ENCODE measurements at regions of chr1 and their contacts with region 1.

Region 1: GRCh38 chr1:207672522-207673130 is 27.7 kb downstream of the CR1L start:
- DNase-seq: no peak
- ATAC-seq: no peak
- H3K4me3 Mint-ChIP-seq: no peak overlapping the region
- H3K27ac Mint-ChIP-seq: no peak overlapping the region
- H3K4me1 Mint-ChIP-seq: no peaks in the 10 kb centered on the region
- H3K27me3 Mint-ChIP-seq: peaks cover 56% of the 10 kb centered on the region

Region 2: DNA sequence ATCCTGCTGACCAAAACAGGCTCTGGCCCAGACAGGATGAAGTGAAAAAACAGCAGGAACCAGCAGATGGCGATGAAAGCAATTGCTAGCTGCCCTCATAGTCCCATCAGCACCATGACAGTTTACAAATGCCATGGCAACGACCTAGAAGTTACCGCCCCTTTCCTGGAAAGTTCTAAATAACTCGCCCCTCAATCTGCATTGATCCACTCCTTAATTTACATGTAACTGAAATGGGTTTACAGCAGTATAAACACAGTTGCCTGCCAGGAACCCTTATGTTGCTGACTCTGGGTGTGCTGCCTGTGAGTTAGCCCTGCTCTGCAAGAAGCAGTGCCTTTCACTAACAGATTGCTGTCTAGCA is 93.2 kb before region 1 on chr1:
- CTCF ChIA-PET with region 1: interaction called, 12 read pairs
- DNase-seq: peak; percentile 68
- ATAC-seq: peak; percentile 95
- H3K4me3 Mint-ChIP-seq: no peak overlapping the region
- H3K27ac Mint-ChIP-seq: no peak overlapping the region
- H3K4me1 Mint-ChIP-seq: peaks cover 2% of the 10 kb centered on the region
- H3K27me3 Mint-ChIP-seq: peaks cover 32% of the 10 kb centered on the region

Region 3: GRCh38 chr1:207603777-207604176 is 68.8 kb before region 1 on chr1:
- CTCF ChIA-PET with region 1: no interaction called
- DNase-seq: no peak
- ATAC-seq: no peak
- H3K4me3 Mint-ChIP-seq: no peak overlapping the region
- H3K27ac Mint-ChIP-seq: no peak overlapping the region
- H3K4me1 Mint-ChIP-seq: no peaks in the 10 kb centered on the region
- H3K27me3 Mint-ChIP-seq: peaks cover 35% of the 10 kb centered on the region

Region 4: DNA sequence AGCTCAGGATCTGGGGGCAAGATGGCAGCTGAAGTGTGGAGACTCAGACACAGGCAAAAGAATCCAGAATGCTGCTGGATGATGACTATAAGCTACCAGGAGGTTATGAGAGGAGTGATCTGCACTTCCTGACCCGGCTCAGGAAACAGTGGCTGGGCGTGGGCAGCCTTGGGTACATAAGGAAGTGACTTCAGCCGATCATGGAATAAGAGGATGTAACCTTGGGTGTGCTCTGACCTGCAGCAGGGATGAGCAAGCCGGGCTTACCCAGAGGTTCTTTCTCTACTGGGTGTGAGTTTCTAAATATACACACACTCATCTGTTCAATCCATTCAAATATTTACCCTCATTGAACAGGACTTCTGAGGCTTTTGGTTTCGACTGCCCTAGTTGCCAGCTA is 175.6 kb after region 1 on chr1:
- CTCF ChIA-PET with region 1: no interaction called
- DNase-seq: peak; percentile 60
- ATAC-seq: peak; percentile 83
- H3K4me3 Mint-ChIP-seq: peak overlapping the region; percentile 2
- H3K27ac Mint-ChIP-seq: peak overlapping the region; percentile 44
- H3K4me1 Mint-ChIP-seq: peaks cover 40% of the 10 kb centered on the region
- H3K27me3 Mint-ChIP-seq: no peaks in the 10 kb centered on the region